ENCODE measurements at regions of chr1 and their contacts with region 1.

Region 1: GRCh38 chr1:41516168-41517061 is 31.9 kb upstream of the EDN2 start:
- DNase-seq: peak; percentile 34
- H3K4me3 ChIP-seq: peak overlapping the region; percentile 49
- H3K27ac ChIP-seq: no peak overlapping the region
- H3K27me3 ChIP-seq: no peaks in the 10 kb centered on the region
- CTCF ChIP-seq: peak; percentile 89

Region 2: DNA sequence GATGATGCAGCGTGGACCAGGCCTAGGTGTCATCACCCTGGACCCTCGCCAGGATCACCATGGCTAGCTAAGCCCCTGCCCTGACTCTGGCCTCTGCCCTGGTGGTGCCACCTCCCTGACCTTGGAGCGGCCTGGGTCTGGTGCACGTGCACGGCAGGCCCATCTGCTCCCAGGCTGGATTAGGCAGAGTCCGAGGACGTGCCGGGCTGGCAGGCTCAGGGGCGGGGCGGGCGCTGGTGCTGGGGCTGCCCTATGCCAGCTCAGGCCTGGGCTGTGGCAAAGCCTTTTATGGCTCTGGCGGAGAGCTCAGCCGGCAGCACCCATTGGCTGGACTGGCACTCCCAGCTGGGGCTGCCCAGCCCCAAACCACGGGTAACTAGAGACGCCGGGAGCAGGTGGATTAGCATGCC is 14.9 kb before region 1 on chr1:
- CTCF ChIA-PET with region 1: interaction called, 10 read pairs
- POLR2A ChIA-PET with region 1: interaction called, 3 read pairs
- DNase-seq: no peak
- H3K4me3 ChIP-seq: no peak overlapping the region
- H3K27ac ChIP-seq: no peak overlapping the region
- H3K27me3 ChIP-seq: no peaks in the 10 kb centered on the region
- CTCF ChIP-seq: no peak

Region 3: GRCh38 chr1:41537788-41538351 is 21.5 kb after region 1 on chr1:
- CTCF ChIA-PET with region 1: interaction called, 22 read pairs
- POLR2A ChIA-PET with region 1: no interaction called
- DNase-seq: peak; percentile 69
- H3K4me3 ChIP-seq: no peak overlapping the region
- H3K27ac ChIP-seq: no peak overlapping the region
- H3K27me3 ChIP-seq: no peaks in the 10 kb centered on the region
- CTCF ChIP-seq: no peak

Region 4: GRCh38 chr1:41547781-41548560 is 31.6 kb after region 1 on chr1:
- CTCF ChIA-PET with region 1: no interaction called
- POLR2A ChIA-PET with region 1: no interaction called
- DNase-seq: no peak
- H3K4me3 ChIP-seq: no peak overlapping the region
- H3K27ac ChIP-seq: no peak overlapping the region
- H3K27me3 ChIP-seq: no peaks in the 10 kb centered on the region
- CTCF ChIP-seq: no peak

Measured in AG04450 (cell line).